Activated T-helper 2 cell treated with anti-CD3 and anti-CD28 coated beads, Interferon-gamma antibody, Interleukin-2, Interleukin-4, amounts not matched to agents 10 μg/mL and 5 μg/mL and 100 μg/mL, durations not matched to agents 14 hours and 24 hours and 36 hours (primary cell): ENCODE measurements at regions of chr9 and their contacts with region 1.

Region 1: GRCh38 chr9:113578882-113579282 is 115.4 kb downstream of the RGS3 start:
- DNase-seq: peak; percentile 84
- H3K4me3 Mint-ChIP-seq: peak overlapping the region; percentile 79
- H3K27ac Mint-ChIP-seq: peak overlapping the region; percentile 93
- H3K4me1 Mint-ChIP-seq: peaks cover 72% of the 10 kb centered on the region
- H3K27me3 Mint-ChIP-seq: no peaks in the 10 kb centered on the region

Region 2: GRCh38 chr9:113511856-113512761 is 66.8 kb before region 1 on chr9:
- intact Hi-C with region 1: loop called (anchors 1 kb)
- DNase-seq: peak; percentile 66
- H3K4me3 Mint-ChIP-seq: peak overlapping the region; percentile 54
- H3K27ac Mint-ChIP-seq: peak overlapping the region; percentile 96
- H3K4me1 Mint-ChIP-seq: peaks cover 56% of the 10 kb centered on the region
- H3K27me3 Mint-ChIP-seq: peaks cover 4% of the 10 kb centered on the region

Region 3: GRCh38 chr9:113523421-113524236 is 55.3 kb before region 1 on chr9:
- intact Hi-C with region 1: loop called (anchors 1 kb)
- DNase-seq: peak; percentile 33
- H3K4me3 Mint-ChIP-seq: peak overlapping the region; percentile 62
- H3K27ac Mint-ChIP-seq: peak overlapping the region; percentile 65
- H3K4me1 Mint-ChIP-seq: peaks cover 70% of the 10 kb centered on the region
- H3K27me3 Mint-ChIP-seq: no peaks in the 10 kb centered on the region

Region 4: DNA sequence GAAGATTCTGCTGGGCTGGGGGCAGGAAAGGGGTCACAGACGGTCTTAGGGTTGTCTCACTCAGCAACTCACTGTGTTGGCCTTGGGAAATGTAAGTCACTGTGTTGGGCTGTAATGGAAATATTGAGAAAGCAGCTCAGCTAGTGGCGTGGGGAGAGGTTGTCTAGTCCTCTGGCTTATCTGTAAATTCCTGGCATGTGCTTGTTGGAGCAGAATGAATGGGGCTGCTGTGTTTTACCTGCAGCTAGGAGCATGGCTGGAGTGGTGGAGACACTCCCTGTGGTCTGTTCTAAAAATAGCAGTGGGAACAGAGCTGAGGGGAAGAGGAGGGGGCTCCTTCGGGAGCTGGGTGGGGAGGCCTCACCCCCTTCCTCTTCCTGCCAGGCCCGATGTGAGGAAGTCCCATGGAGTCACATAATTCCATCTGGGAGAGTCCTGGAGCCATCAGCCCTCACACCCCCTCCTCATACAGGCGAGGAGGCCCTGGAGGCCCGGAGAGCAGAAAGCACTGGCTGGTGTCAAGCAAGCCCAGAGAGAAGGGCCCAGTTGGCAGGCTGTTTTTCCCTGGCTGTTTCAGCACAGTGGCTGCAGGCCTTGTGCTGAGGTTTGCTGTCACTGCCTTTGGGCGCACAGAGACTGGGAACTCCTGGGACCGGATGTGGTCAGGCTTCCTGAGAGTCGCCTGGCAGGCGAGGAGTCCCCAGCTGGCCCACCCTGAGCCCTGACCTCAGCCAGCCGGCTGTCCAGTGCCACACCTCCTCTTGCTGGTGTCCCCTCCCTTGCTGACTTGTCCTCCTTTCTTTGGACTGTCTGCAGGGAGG is 30.5 kb before region 1 on chr9:
- intact Hi-C with region 1: loop called (anchors 1 kb)
- DNase-seq: no peak
- H3K4me3 Mint-ChIP-seq: no peak overlapping the region
- H3K27ac Mint-ChIP-seq: peak overlapping the region; percentile 82
- H3K4me1 Mint-ChIP-seq: peaks cover 22% of the 10 kb centered on the region
- H3K27me3 Mint-ChIP-seq: no peaks in the 10 kb centered on the region

Region 5: GRCh38 chr9:113556877-113557593 is 21.8 kb before region 1 on chr9:
- intact Hi-C with region 1: loop called (anchors 1 kb)
- DNase-seq: no peak
- H3K4me3 Mint-ChIP-seq: no peak overlapping the region
- H3K27ac Mint-ChIP-seq: no peak overlapping the region
- H3K4me1 Mint-ChIP-seq: peaks cover 33% of the 10 kb centered on the region
- H3K27me3 Mint-ChIP-seq: no peaks in the 10 kb centered on the region

Region 6: GRCh38 chr9:113622600-113623400 is 43.9 kb after region 1 on chr9:
- intact Hi-C with region 1: loop called (anchors 1 kb)
- DNase-seq: peak; percentile 20
- H3K4me3 Mint-ChIP-seq: peak overlapping the region; percentile 53
- H3K27ac Mint-ChIP-seq: peak overlapping the region; percentile 98
- H3K4me1 Mint-ChIP-seq: peaks cover 52% of the 10 kb centered on the region
- H3K27me3 Mint-ChIP-seq: no peaks in the 10 kb centered on the region